ENCODE measurements at regions of chr12 and their contacts with region 1.

Region 1: GRCh38 chr12:26906704-26907103 is 31.1 kb downstream of the INTS13 start:
- DNase-seq: no peak

Region 2: GRCh38 chr12:26878661-26879119 is 28.0 kb before region 1 on chr12:
- intact Hi-C with region 1: no loop called
- DNase-seq: peak; percentile 84

Region 3: GRCh38 chr12:26976687-26977086 is 70.0 kb after region 1 on chr12:
- intact Hi-C with region 1: loop called in 1 of 2 experiments (anchors 5 kb)
- DNase-seq: no peak